Panc1 (cell line): ENCODE measurements at regions of chr17 and their contacts with region 1.

Region 1: DNA sequence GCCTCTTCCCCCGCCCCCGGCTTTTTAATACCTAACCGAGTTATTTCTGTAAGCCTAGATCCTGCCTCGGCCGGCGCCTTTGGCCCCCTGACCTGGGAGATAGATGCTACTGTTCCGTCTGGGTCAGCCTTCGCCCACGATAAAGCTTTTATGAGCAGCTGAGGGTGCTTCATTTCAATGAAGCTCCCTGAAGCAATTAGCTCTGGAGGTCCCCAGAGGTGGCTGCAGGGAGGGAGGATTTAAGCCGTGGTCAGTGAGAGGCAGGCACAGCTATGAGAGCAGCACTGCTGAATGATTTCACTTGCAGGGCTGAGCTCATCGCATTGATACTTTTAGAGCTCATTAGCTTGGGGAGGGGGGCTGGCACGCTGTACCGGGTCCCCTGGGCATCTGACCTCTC is 89.4 kb downstream of the RPA1 start:
- DNase-seq: no peak
- ATAC-seq: no peak
- H3K4me3 ChIP-seq: no peak overlapping the region
- H3K27ac ChIP-seq: no peak overlapping the region
- H3K4me1 ChIP-seq: no peaks in the 10 kb centered on the region
- H3K27me3 ChIP-seq: no peaks in the 10 kb centered on the region
- CTCF ChIP-seq: no peak

Region 2: DNA sequence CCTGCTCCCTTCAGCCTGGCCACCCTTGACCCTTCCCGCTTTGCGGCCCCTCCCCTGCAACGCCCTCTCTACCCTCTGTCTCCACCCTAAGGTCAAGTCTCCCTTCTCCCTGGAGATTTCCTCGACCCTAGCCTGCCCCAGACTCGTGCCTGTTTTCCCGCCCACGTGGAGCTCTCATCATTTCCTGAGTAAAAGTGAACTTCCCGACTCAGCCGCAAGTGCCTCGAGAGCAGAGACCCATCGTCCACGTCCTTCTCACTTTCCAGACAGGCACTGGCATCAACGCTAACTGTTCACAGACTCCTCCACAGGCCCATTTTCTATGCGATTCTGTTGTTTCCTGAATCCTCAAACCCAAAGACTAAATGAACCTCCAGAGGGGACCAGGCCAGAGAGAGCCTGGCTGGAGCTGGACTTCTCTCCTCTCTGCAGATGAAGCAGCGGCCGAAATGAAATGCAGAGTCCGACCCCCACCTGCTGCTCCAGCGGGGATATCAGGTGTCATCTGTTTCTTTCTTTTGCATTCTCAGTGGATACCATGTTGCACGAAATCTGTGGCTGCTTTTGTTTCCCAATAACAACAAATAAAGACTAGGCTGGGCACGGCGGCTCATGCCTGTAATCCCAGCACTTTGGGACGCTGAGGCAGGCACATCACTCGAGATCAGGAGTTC is 53.4 kb after region 1 on chr17:
- CTCF ChIA-PET with region 1: no interaction called
- POLR2A ChIA-PET with region 1: interaction called, 10 read pairs
- in situ Hi-C with region 1: no loop called
- intact Hi-C with region 1: no loop called
- DNase-seq: no peak
- ATAC-seq: no peak
- H3K4me3 ChIP-seq: no peak overlapping the region
- H3K27ac ChIP-seq: no peak overlapping the region
- H3K4me1 ChIP-seq: no peaks in the 10 kb centered on the region
- H3K27me3 ChIP-seq: no peaks in the 10 kb centered on the region
- CTCF ChIP-seq: no peak

Region 3: GRCh38 chr17:2075336-2076086 is 156.3 kb after region 1 on chr17:
- CTCF ChIA-PET with region 1: no interaction called
- POLR2A ChIA-PET with region 1: no interaction called
- in situ Hi-C with region 1: no loop called
- intact Hi-C with region 1: no loop called
- DNase-seq: no peak
- ATAC-seq: no peak
- H3K4me3 ChIP-seq: no peak overlapping the region
- H3K27ac ChIP-seq: no peak overlapping the region
- H3K4me1 ChIP-seq: no peaks in the 10 kb centered on the region
- H3K27me3 ChIP-seq: no peaks in the 10 kb centered on the region
- CTCF ChIP-seq: no peak